Activated naive CD4-positive, alpha-beta T cell treated with anti-CD3 and anti-CD28 coated beads for 36 hours (primary cell): ENCODE measurements at regions of chr4 and their contacts with region 1.

Region 1: DNA sequence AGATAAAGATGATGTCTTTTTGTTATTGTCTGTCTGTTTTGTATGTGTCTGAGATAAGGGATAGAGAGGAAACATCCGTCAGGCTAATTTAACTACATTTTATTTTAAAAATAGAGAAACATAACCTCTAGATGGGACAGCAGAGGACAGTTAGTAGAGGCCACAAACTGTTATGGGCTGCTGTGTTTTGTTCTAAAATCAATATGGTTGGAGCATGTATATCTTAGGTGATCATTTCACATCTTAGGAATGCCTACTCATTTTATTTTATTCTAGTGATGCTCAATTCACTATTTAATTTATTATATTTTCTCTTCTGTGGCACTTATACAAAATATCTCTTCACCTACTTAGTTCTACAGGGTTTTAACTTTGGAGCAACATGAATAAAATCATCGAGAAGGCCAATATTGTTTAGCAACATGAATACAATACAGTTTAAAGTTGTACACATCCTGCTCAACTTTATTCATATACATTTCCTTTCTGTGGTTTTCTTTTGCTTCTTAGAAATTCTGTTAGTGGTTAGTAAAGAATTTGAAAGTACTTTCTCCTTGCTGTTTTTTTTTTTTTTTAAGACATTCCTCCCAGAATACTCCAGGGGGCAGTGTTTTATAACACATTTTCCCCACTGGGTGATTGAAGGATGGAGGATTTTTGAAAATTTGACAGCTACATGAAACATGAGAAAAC is 392.9 kb downstream of the UNC5C start:
- DNase-seq: no peak
- H3K4me3 Mint-ChIP-seq: no peak overlapping the region
- H3K27ac Mint-ChIP-seq: no peak overlapping the region
- H3K4me1 Mint-ChIP-seq: peaks cover 13% of the 10 kb centered on the region
- H3K27me3 Mint-ChIP-seq: no peaks in the 10 kb centered on the region

Region 2: GRCh38 chr4:94849901-94850300 is 306.0 kb before region 1 on chr4:
- CTCF ChIA-PET with region 1: no interaction called
- intact Hi-C with region 1: no loop called
- DNase-seq: no peak
- H3K4me3 Mint-ChIP-seq: no peak overlapping the region
- H3K27ac Mint-ChIP-seq: no peak overlapping the region
- H3K4me1 Mint-ChIP-seq: no peaks in the 10 kb centered on the region
- H3K27me3 Mint-ChIP-seq: peaks cover 6% of the 10 kb centered on the region

Region 3: DNA sequence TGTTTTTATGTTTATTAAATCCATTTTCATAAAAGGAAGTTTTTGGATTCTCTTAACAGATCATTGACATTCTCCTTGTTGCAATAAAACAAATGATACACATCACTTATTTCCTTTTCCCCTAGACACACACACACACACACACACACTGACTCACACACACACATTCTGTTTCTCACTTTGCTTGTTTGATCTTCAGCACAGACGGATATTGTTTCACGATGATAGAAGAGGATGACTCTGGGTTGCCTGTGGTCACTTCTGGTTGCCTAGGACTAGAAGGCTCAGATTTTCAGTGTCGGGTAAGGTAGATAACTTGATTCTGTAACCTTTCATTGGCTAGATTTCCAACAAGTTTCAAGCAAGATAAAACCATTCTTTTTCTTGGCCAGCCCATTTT is 41.4 kb before region 1 on chr4:
- CTCF ChIA-PET with region 1: no interaction called
- intact Hi-C with region 1: no loop called
- DNase-seq: peak; percentile 19
- H3K4me3 Mint-ChIP-seq: no peak overlapping the region
- H3K27ac Mint-ChIP-seq: no peak overlapping the region
- H3K4me1 Mint-ChIP-seq: no peaks in the 10 kb centered on the region
- H3K27me3 Mint-ChIP-seq: no peaks in the 10 kb centered on the region

Region 4: GRCh38 chr4:95510145-95510544 is 354.2 kb after region 1 on chr4:
- CTCF ChIA-PET with region 1: no interaction called
- intact Hi-C with region 1: loop called (anchors 5 kb)
- DNase-seq: no peak
- H3K4me3 Mint-ChIP-seq: no peak overlapping the region
- H3K27ac Mint-ChIP-seq: no peak overlapping the region
- H3K4me1 Mint-ChIP-seq: no peaks in the 10 kb centered on the region
- H3K27me3 Mint-ChIP-seq: peaks cover 8% of the 10 kb centered on the region

Region 5: GRCh38 chr4:95835672-95836071 is 679.8 kb after region 1 on chr4:
- CTCF ChIA-PET with region 1: no interaction called
- intact Hi-C with region 1: loop called (anchors 10 kb)
- DNase-seq: peak; percentile 7
- H3K4me3 Mint-ChIP-seq: no peak overlapping the region
- H3K27ac Mint-ChIP-seq: no peak overlapping the region
- H3K4me1 Mint-ChIP-seq: no peaks in the 10 kb centered on the region
- H3K27me3 Mint-ChIP-seq: no peaks in the 10 kb centered on the region